PC-9 (cell line): ENCODE measurements at regions of chr11 and their contacts with region 1.

Region 1: GRCh38 chr11:119101759-119102423 is at the start of gene DPAGT1:
- DNase-seq: peak; percentile 85 to 98
- H3K4me3 ChIP-seq: peak within 1 kb of the TSS; percentile 79
- H3K27ac ChIP-seq: peak within 1 kb of the TSS; percentile 87
- H3K4me1 ChIP-seq: peaks cover 31% of the 10 kb centered on the region
- H3K27me3 ChIP-seq: no peaks in the 10 kb centered on the region
- CTCF ChIP-seq: no peak
- total RNA-seq, gene DPAGT1: 32.8 and 41.1 TPM in 2 replicates

Region 2: DNA sequence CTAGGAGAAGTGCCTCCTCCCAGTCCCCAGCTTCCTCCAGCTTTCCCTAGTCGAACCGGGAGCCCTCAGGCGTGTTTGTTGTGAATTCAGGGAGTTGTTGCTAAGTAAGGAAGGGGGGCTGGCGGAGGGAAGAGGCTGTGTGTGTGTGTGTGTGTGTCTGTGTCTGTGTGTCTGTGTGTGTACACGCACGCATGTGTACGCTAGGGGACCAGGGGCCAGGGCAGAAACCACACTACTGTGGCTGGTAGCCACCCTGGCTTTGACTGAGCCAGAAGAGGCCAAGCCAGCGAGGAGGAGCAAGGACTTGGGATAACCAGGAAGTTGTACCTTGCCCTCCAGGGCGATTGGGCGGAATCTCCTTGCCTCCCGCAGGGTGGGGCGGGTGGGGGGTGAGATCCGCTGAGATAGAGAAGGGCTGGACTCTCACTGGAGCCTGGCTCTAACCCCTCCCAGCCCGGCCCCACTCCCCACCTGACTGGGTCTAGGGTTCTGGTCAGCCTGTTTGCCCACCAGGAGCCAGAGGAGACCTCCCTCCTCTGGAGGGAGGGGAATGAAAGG is 183.7 kb before region 1 on chr11:
- CTCF ChIA-PET with region 1: no interaction called
- POLR2A ChIA-PET with region 1: interaction called, 15 read pairs
- intact Hi-C with region 1: no loop called
- DNase-seq: peak; percentile 79 to 97
- H3K4me3 ChIP-seq: peak overlapping the region; percentile 54
- H3K27ac ChIP-seq: peak overlapping the region; percentile 96
- H3K4me1 ChIP-seq: peaks cover 77% of the 10 kb centered on the region
- H3K27me3 ChIP-seq: no peaks in the 10 kb centered on the region
- CTCF ChIP-seq: no peak

Region 3: DNA sequence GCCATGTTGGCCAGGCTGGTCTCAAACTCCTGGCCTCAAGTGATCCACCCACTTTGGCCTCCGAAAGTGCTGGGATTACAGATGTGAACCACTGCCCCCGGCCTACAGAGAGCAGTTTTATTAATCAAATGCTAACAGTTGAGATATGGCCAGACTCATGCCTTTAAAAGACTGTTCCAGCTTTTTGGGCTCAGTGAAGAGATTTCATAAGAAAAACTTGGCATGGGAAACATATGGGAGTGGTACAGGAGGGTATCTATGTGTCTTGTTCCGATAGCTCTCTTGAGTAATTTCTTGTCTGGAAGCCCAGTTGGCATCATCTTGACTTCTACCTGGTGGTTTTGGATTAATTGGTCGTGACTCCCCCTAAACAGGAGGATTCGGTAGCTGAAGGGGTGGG is 63.0 kb before region 1 on chr11:
- CTCF ChIA-PET with region 1: no interaction called
- POLR2A ChIA-PET with region 1: no interaction called
- intact Hi-C with region 1: no loop called
- DNase-seq: no peak
- H3K4me3 ChIP-seq: no peak overlapping the region
- H3K27ac ChIP-seq: no peak overlapping the region
- H3K4me1 ChIP-seq: no peaks in the 10 kb centered on the region
- H3K27me3 ChIP-seq: no peaks in the 10 kb centered on the region
- CTCF ChIP-seq: no peak

Region 4: GRCh38 chr11:119084663-119085436 is 17.0 kb before region 1 on chr11 and contains the start of gene HMBS:
- CTCF ChIA-PET with region 1: interaction called, 16 read pairs
- POLR2A ChIA-PET with region 1: interaction called, 11 read pairs
- intact Hi-C with region 1: no loop called
- DNase-seq: peak; percentile 92 to 94
- H3K4me3 ChIP-seq: peak within 1 kb of the TSS; percentile 86
- H3K27ac ChIP-seq: peak within 1 kb of the TSS; percentile 53
- H3K4me1 ChIP-seq: peaks cover 24% of the 10 kb centered on the region
- H3K27me3 ChIP-seq: no peaks in the 10 kb centered on the region
- CTCF ChIP-seq: no peak
- total RNA-seq, gene HMBS: 49.3 and 54.9 TPM in 2 replicates

Region 5: DNA sequence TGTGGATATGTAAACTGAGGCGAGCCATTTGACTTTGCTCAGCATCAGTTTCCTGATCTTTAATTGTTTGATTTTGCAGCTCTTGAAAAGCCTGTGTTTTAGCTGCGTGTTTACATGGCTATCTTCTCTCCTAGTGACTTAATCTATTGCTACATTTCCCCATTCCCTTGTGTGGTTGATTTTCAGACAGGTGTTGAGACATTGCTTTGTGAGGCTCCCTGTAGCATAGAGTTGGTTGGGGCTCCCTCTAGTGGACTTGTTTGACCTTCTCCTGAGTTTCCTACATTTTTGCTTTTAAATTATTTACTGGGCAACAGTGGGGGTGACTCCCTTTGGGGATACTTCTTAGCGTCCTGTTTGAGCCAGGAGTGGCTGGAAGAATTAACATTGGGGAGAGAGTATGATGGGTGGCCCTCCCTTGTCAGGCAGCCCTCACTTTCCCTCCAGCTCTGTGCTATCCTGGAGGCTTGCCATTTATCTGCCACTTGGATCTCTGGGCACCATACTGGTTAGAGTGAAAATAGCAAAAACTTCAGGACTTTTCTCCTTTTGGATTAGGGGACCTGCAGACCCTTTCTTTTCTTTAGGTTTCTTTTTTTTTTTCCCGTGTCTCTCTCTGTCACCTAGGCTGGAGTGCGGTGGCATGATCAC is 95.1 kb after region 1 on chr11:
- CTCF ChIA-PET with region 1: interaction called, 8 read pairs
- POLR2A ChIA-PET with region 1: no interaction called
- intact Hi-C with region 1: loop called (anchors 2 kb)
- DNase-seq: peak; percentile 69 to 88
- H3K4me3 ChIP-seq: no peak overlapping the region
- H3K27ac ChIP-seq: no peak overlapping the region
- H3K4me1 ChIP-seq: peaks cover 14% of the 10 kb centered on the region
- H3K27me3 ChIP-seq: no peaks in the 10 kb centered on the region
- CTCF ChIP-seq: peak; percentile 95

Region 6: GRCh38 chr11:119338318-119338907 is 236.5 kb after region 1 on chr11:
- CTCF ChIA-PET with region 1: interaction called, 9 read pairs
- POLR2A ChIA-PET with region 1: no interaction called
- intact Hi-C with region 1: loop called (anchors 1 kb)
- DNase-seq: peak; percentile 58 to 63
- H3K4me3 ChIP-seq: no peak overlapping the region
- H3K27ac ChIP-seq: no peak overlapping the region
- H3K4me1 ChIP-seq: peaks cover 16% of the 10 kb centered on the region
- H3K27me3 ChIP-seq: peaks cover 10% of the 10 kb centered on the region
- CTCF ChIP-seq: peak; percentile 94